ENCODE measurements at regions of chr3 and their contacts with region 1.

Region 1: GRCh38 chr3:159839561-159840379 is 148.9 kb upstream of the IL12A start:
- DNase-seq: no peak
- ATAC-seq: peak; percentile 62

Region 2: GRCh38 chr3:158127250-158128219 is 1712.2 kb before region 1 on chr3:
- intact Hi-C with region 1: no loop called
- DNase-seq: no peak
- ATAC-seq: no peak

Region 3: DNA sequence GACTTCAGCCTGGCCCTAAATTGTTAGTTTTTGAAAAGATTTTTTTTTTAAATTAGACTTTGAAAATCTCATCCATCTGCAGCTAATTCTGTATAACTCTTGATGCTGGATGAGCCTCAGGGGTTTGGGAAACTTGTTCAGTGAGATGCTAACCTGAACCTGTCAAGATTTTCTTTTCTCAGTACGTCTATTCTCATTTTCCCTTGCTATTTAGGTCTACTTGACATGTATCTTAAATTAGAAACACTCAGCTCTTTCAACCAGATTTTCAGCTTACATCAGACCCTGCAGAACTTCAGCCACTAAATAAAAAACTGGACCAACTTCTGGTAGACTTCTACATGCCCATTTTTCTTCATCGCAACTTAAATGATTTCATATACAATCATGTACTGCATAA is 976.5 kb before region 1 on chr3:
- intact Hi-C with region 1: no loop called
- DNase-seq: no peak
- ATAC-seq: no peak

Region 4: DNA sequence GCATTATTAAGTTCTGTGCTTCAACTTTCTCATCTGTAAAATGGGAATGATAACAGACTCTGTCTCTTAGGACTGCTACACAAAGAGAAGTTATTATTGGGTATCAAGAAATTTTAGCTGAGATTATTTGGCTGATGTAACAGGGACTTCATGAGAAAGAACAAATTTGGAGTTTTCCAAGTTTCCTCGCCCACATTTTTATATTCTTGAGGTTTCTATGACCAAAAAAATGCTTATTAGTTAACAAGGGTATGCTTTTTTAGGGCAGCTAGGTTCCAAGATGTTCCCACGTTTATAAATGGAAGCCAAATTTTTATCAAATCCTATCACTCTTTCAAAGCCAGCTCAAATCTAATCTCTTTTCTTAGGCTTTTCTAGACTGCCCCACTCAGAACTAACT is 334.9 kb after region 1 on chr3:
- intact Hi-C with region 1: loop called (anchors 5 kb)
- DNase-seq: no peak
- ATAC-seq: no peak